Gastrocnemius medialis (tissue), 4 donors: ENCODE measurements at regions of chr3 and their contacts with region 1.

Region 1: DNA sequence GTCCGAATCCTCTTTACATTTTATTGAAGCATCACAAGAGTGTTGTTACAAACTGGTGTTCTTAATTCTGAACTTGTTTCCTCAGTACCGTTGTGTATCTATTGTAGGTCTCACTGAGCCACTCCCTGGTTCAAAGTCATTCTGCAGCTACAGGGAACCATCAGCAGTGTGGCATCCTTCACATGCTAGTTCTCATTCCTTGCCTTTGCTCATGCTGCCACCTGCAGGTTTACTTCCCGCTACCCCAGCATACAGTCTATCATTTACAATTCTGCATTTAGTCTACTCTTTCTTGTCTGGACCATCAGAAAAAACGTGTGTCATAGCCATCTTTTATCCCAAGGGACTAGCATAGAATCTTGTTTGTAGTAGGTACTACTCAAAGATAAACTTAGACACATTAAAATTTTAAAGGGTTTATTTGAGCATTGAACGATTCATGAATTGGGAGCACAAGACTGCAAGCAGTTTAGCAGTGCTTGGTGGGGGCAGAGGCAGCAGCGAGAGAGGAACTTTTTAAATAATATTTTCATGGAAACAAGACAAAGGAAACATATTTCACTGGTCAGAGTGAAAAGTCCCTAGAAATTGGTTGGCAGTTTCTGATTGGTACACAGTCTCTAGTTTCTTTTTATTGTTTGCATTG is 402.1 kb downstream of the CADM2 start:
- DNase-seq: peak in 1 of 2 donors; percentile 15
- ATAC-seq: peak; percentile 64 to 65
- H3K4me3 ChIP-seq: no peak overlapping the region
- H3K27ac ChIP-seq: no peak overlapping the region
- H3K4me1 ChIP-seq: no peaks in the 10 kb centered on the region
- H3K27me3 ChIP-seq: no peaks in the 10 kb centered on the region
- CTCF ChIP-seq: peak in 4 of 5 experiments; percentile 15 to 49 (median 32)
- POLR2A ChIP-seq: no peak

Region 2: DNA sequence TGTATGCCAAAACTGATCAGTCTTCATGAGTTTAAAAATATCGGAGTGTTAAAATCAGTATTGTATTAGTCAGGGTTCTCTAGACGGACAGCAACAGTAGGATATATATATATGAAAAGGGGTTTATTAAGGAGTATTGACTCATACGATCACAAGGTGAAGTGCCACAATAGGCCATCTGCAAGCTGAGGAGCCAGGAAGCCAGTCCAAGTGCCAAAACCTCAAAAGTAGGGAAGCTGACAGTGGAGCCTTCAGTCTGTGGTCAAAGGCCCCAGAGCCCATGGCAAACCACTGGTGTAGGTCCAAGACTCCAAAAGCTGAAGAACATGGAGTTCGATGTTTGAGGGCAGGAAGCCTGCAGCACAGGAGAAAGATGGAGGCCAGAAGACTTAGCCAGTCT is 793.1 kb before region 1 on chr3:
- in situ Hi-C with region 1: loop called in 1 of 4 experiments (anchors 25 kb)
- intact Hi-C with region 1: no loop called
- DNase-seq: no peak
- ATAC-seq: no peak
- H3K4me3 ChIP-seq: no peak overlapping the region
- H3K27ac ChIP-seq: no peak overlapping the region
- H3K4me1 ChIP-seq: no peaks in the 10 kb centered on the region
- H3K27me3 ChIP-seq: no peaks in the 10 kb centered on the region
- CTCF ChIP-seq: no peak
- POLR2A ChIP-seq: no peak

Region 3: DNA sequence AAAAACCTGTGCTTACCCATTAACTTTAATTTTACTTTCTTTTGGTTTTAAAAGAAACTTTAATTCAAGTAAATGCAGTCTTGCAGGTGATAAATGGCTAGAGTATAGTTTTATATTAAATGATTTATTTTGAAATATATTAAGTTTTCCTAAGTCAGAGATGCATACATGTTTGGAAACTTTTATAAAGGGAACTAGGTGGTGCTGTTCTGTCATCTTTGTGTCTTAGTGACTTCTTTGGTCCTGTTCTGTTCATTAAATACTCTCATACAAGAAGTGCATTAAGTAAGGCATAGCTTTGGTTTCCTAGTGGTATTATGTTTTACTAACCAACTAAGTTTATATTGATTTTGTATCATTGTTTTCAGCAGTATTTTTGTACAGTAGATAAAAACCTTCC is 386.5 kb before region 1 on chr3:
- in situ Hi-C with region 1: no loop called
- intact Hi-C with region 1: loop called (anchors 5 kb)
- DNase-seq: no peak
- ATAC-seq: peak in 1 of 2 donors; percentile 56
- H3K4me3 ChIP-seq: no peak overlapping the region
- H3K27ac ChIP-seq: no peak overlapping the region
- H3K4me1 ChIP-seq: peaks cover 0 to 11% of the 10 kb centered on the region in 2 donors
- H3K27me3 ChIP-seq: no peaks in the 10 kb centered on the region
- CTCF ChIP-seq: peak in 2 of 5 experiments; percentile 11 to 33
- POLR2A ChIP-seq: no peak